Adrenal gland (tissue), 19 donors: ENCODE measurements at regions of chr17 and their contacts with region 1.

Region 1: DNA sequence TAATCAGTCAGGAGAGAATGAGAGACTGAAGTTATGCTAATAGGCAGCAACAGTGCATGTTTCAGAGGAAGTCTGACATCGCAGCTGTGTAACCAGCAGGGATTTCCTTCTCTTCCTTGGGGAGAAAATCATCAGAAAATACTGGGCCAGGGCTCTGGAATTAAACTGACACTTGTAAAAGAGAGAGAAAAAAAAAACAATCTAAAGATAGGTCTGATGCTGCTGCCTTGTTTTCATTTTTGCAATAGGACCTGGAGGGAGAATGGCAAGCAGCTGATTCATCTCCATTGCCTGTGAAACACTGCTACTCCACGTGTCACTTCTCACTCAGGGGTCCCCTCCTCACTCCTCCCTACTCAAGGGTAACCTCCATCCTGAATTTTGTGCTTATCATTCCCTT is 17.7 kb upstream of the CORO6 start:
- DNase-seq: no peak
- H3K4me3 ChIP-seq: no peak overlapping the region
- H3K27ac ChIP-seq: no peak overlapping the region
- H3K4me1 ChIP-seq: peaks cover 4 to 24% of the 10 kb centered on the region in 2 donors
- H3K27me3 ChIP-seq: no peaks in the 10 kb centered on the region
- CTCF ChIP-seq: no peak
- POLR2A ChIP-seq: no peak

Region 2: GRCh38 chr17:29782917-29783316 is 142.5 kb after region 1 on chr17:
- intact Hi-C with region 1: loop called in 1 of 2 experiments (anchors 5 kb)
- DNase-seq: no peak
- H3K4me3 ChIP-seq: no peak overlapping the region
- H3K27ac ChIP-seq: no peak overlapping the region
- H3K4me1 ChIP-seq: peaks cover 4 to 26% of the 10 kb centered on the region in 2 donors
- H3K27me3 ChIP-seq: no peaks in the 10 kb centered on the region
- CTCF ChIP-seq: no peak
- POLR2A ChIP-seq: no peak